ENCODE measurements at regions of chr2 and their contacts with region 1.

Region 1: DNA sequence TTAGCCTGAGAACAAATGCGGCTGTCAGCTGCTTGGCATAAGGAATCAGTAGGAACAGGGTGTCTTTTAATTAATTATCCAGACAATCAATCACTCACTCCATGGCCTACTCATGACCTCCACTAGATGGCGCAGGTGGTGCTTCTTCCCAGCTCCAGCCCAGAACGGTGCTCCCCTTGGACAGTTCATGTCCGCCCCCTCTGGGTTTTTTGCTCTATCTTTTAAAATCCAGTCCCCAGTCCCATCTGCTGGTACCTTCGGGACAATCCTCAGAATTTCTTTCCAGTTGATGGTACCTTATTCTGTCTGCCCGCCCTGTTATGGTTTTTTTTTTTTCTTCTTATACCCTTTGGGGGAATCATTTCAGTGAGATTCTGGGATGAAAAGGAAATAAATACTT is 99.8 kb downstream of the CACNB4 start:
- H3K4me3 ChIP-seq: no peak overlapping the region
- H3K27ac ChIP-seq: no peak overlapping the region
- H3K4me1 ChIP-seq: no peaks in the 10 kb centered on the region
- CTCF ChIP-seq: peak; percentile 48; the same call in 1 of the 2 replicates

Region 2: DNA sequence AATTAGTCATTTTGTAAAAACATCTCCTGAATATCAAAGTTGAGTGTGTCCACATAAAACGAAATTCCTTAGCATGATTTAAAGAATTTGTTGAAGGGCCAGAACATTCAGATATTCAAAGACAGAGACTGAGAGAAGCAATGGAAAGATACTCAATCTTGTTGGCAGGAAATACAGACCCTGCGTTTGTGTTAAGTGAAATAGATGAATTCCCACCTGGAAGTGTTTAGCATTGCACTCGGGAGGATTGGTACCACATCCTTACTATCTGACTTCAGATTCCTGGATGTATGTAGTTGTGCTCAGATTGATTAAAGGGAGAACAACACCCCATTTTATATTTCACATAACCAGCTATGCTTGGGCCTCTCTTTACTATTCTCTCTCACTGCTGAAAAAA is 161.1 kb before region 1 on chr2:
- CTCF ChIA-PET with region 1: interaction called, 10 read pairs
- POLR2A ChIA-PET with region 1: no interaction called
- H3K4me3 ChIP-seq: no peak overlapping the region
- H3K27ac ChIP-seq: no peak overlapping the region
- H3K4me1 ChIP-seq: no peaks in the 10 kb centered on the region
- CTCF ChIP-seq: no peak

Region 3: GRCh38 chr2:151984424-151985083 is 14.5 kb before region 1 on chr2:
- CTCF ChIA-PET with region 1: interaction called, 24 read pairs
- POLR2A ChIA-PET with region 1: no interaction called
- H3K4me3 ChIP-seq: no peak overlapping the region
- H3K27ac ChIP-seq: no peak overlapping the region
- H3K4me1 ChIP-seq: no peaks in the 10 kb centered on the region
- CTCF ChIP-seq: no peak

Region 4: DNA sequence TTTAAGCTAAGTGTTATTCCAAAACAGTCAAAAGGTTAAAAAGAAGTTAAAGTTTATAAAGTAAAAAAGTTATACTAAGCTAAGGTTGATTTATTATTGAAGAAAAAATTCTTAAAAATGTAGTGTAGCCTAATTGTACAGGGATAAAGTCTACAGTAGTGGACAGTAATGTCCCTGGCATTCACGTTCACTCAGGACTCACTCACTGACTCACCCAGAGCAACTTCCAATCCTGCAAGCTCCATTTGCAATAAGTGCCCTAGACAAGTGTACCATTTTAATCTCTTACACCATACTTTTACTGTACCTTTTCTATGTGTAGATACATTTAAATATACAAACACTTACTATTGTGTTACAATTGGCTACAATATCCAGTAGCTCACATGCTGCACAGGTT is 13.6 kb after region 1 on chr2:
- CTCF ChIA-PET with region 1: interaction called, 13 read pairs
- POLR2A ChIA-PET with region 1: no interaction called
- H3K4me3 ChIP-seq: no peak overlapping the region
- H3K27ac ChIP-seq: no peak overlapping the region
- H3K4me1 ChIP-seq: no peaks in the 10 kb centered on the region
- CTCF ChIP-seq: no peak

Region 5: DNA sequence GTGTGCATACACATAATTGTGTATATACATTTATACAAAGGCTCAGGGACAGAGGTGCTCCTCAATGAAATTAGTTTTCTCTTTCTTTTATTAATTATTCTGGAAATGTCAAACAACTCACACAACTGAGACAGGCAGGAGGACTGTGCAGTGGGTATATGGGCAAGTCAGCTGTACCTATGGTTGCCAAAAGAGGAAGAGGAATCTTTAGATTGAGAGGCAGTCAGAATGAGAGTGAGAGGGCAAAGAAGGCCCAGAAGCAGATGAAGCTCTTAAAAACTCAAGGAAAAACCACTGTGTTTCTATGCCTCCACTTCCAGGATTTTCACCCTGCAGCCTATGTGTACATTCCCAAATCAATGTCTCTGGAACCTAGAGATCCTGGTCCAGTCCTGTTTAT is 20.7 kb after region 1 on chr2:
- CTCF ChIA-PET with region 1: interaction called, 20 read pairs
- POLR2A ChIA-PET with region 1: no interaction called
- H3K4me3 ChIP-seq: no peak overlapping the region
- H3K27ac ChIP-seq: no peak overlapping the region
- H3K4me1 ChIP-seq: no peaks in the 10 kb centered on the region
- CTCF ChIP-seq: no peak